ENCODE measurements at regions of chr2 and their contacts with region 1.

Region 1: GRCh38 chr2:219627103-219628100 is at the start of gene SLC4A3:
- DNase-seq: peak in 2 of 3 donors; percentile 26 to 38
- H3K4me3 ChIP-seq: peak within 1 kb of the TSS in 6 of 7 experiments; percentile 15 to 66 (median 52)
- H3K27ac ChIP-seq: no peak within 1 kb of the TSS
- H3K4me1 ChIP-seq: peaks cover 0 to 23% (median 19%) of the 10 kb centered on the region in 4 experiments
- H3K27me3 ChIP-seq: peaks cover 0 to 31% (median 17%) of the 10 kb centered on the region in 5 experiments

Region 2: DNA sequence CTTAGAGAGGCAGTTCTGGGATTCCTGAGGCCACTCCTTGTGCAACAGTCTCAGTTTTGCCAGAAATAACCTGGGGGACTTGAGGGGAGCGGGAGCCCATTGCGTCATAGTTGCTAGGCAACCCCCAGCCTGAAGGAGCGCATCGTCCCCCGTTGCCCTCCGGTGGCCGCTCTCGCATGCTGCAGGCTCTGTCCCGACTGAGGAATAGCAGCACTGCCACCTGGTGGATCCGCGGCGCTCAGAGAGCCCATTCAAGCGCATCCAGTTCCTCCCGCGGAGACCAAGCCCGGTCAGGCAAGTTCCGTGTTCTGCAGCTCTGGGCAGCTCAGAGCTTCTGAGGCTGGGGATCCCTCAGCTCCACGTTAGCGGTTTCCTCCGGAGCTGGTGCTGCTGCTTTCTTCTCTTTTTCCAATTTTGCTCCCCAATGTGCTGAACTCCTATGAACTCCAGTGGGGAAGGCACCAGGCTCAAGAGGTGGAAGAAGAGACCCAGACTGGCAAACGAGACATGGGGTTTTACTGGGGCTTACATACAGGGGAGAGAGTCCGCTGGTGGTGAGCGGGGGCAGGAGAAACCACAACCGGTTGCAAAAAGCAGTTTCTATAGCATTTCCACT is 15.2 kb after region 1 on chr2:
- CTCF ChIA-PET with region 1: interaction called, 45 read pairs
- POLR2A ChIA-PET with region 1: interaction called, 3 read pairs
- DNase-seq: peak; percentile 97 to 98 (median 97)
- H3K4me3 ChIP-seq: peak overlapping the region in 3 of 7 experiments; percentile 26 to 60 (median 45)
- H3K27ac ChIP-seq: no peak overlapping the region
- H3K4me1 ChIP-seq: peaks cover 0 to 11% (median 8%) of the 10 kb centered on the region in 4 experiments
- H3K27me3 ChIP-seq: no peaks in the 10 kb centered on the region